Activated CD8-positive, alpha-beta T cell treated with anti-CD3 and anti-CD28 coated beads for 36 hours (primary cell): ENCODE measurements at regions of chr15 and their contacts with region 1.

Region 1: GRCh38 chr15:77959432-77959879 is 118.1 kb downstream of the TBC1D2B start:
- DNase-seq: peak; percentile 84
- ATAC-seq: peak; percentile 100
- H3K4me3 Mint-ChIP-seq: peak overlapping the region; percentile 54
- H3K27ac Mint-ChIP-seq: no peak overlapping the region
- H3K4me1 Mint-ChIP-seq: peaks cover 2% of the 10 kb centered on the region
- H3K27me3 Mint-ChIP-seq: peaks cover 7% of the 10 kb centered on the region
- CTCF ChIP-seq: peak; percentile 98

Region 2: DNA sequence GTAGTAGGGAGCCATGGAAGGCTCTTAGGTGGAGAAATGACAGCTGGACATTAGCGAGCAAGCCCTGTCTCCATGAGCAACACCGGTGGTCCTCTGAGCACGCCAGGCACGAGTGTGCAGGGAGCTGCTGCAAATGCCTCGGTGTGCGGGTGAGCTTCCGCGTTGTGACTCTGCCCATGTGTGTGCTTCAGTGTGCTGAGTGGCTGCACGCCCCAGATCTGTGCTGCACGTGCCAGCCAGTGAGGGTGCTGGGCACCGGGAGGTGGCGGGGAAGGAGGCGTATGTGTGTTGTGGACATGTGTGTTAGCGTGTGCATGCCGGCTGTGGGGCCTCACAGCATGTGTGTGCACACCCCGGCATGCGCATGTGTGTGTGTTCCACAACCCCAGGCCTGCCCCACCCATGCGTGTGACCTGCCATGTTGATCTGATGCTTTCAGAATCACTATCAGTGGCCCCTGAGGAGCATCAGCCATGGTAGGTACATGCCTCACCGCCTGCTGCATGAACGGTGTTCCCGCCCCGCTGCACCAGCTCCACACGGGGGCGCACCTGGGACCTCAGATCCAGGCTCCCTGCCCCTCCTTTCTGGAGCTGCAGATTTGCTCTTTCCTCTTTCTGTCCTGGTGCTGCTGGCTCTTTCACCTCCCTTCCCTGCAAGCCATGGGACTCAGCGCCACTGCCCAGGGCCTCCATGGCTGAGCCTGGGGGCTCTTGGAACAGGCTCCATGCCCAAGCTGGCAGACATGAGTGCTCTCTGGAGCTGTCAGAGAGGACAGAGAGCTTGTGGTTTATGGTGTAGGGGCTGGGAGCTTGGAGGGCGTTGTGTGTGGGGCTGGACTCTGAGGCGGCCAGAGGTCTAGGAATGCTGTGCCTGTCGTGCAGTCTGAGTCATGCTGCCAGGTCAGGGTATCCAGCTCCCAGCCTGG is 51.4 kb before region 1 on chr15:
- CTCF ChIA-PET with region 1: interaction called, 14 read pairs
- POLR2A ChIA-PET with region 1: no interaction called
- intact Hi-C with region 1: no loop called
- DNase-seq: peak; percentile 76
- ATAC-seq: peak; percentile 77
- H3K4me3 Mint-ChIP-seq: no peak overlapping the region
- H3K27ac Mint-ChIP-seq: no peak overlapping the region
- H3K4me1 Mint-ChIP-seq: peaks cover 2% of the 10 kb centered on the region
- H3K27me3 Mint-ChIP-seq: no peaks in the 10 kb centered on the region
- CTCF ChIP-seq: peak; percentile 38

Region 3: GRCh38 chr15:78131295-78132061 is 172.0 kb after region 1 on chr15 and contains the start of gene CIB2:
- CTCF ChIA-PET with region 1: interaction called, 15 read pairs
- POLR2A ChIA-PET with region 1: no interaction called
- intact Hi-C with region 1: no loop called
- DNase-seq: peak; percentile 78
- ATAC-seq: peak; percentile 94
- H3K4me3 Mint-ChIP-seq: peak within 1 kb of the TSS; percentile 79
- H3K27ac Mint-ChIP-seq: peak within 1 kb of the TSS; percentile 60
- H3K4me1 Mint-ChIP-seq: peaks cover 22% of the 10 kb centered on the region
- H3K27me3 Mint-ChIP-seq: peaks cover 1% of the 10 kb centered on the region
- CTCF ChIP-seq: peak; percentile 89
- total RNA-seq, gene CIB2: 1.6 TPM